ENCODE measurements at regions of chr6 and their contacts with region 1.

Region 1: GRCh38 chr6:47413752-47414422 is 63.7 kb upstream of the CD2AP start:
- DNase-seq: peak; percentile 47 to 63
- H3K4me3 ChIP-seq: peak overlapping the region; percentile 44
- H3K4me3 Mint-ChIP-seq: peak overlapping the region; percentile 59
- H3K27ac Mint-ChIP-seq: peak overlapping the region; percentile 9
- H3K4me1 ChIP-seq: peaks cover 25% of the 10 kb centered on the region
- H3K4me1 Mint-ChIP-seq: peaks cover 19% of the 10 kb centered on the region
- H3K27me3 ChIP-seq: no peaks in the 10 kb centered on the region
- H3K27me3 Mint-ChIP-seq: no peaks in the 10 kb centered on the region
- CTCF ChIP-seq: peak; percentile 79 to 82

Region 2: DNA sequence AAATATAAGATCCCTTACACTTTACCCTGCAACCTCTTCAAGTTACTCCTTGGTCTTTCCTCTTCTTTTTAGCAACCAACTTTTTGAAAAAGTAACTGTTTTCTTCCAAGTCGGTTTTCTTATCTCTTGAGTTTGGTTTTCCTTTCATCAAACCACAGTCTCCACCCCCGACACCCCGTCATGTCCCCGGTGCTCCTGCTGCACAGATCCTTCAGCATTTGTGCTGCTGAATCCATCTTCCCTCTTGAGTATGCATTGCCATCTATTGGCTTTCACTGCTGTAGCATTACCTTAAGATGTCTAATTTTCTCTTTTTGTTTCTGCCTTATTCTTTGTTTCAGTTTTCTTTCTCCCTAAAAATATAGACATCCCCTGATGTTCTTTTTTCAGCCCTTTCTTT is 92.3 kb before region 1 on chr6:
- CTCF ChIA-PET with region 1: no interaction called
- POLR2A ChIA-PET with region 1: no interaction called
- intact Hi-C with region 1: loop called (anchors 5 kb)
- DNase-seq: no peak
- H3K4me3 ChIP-seq: no peak overlapping the region
- H3K4me3 Mint-ChIP-seq: peak overlapping the region; percentile 5
- H3K27ac Mint-ChIP-seq: peak overlapping the region; percentile 84
- H3K4me1 ChIP-seq: peaks cover 49% of the 10 kb centered on the region
- H3K4me1 Mint-ChIP-seq: peaks cover 43% of the 10 kb centered on the region
- H3K27me3 ChIP-seq: no peaks in the 10 kb centered on the region
- H3K27me3 Mint-ChIP-seq: no peaks in the 10 kb centered on the region
- CTCF ChIP-seq: no peak

Region 3: DNA sequence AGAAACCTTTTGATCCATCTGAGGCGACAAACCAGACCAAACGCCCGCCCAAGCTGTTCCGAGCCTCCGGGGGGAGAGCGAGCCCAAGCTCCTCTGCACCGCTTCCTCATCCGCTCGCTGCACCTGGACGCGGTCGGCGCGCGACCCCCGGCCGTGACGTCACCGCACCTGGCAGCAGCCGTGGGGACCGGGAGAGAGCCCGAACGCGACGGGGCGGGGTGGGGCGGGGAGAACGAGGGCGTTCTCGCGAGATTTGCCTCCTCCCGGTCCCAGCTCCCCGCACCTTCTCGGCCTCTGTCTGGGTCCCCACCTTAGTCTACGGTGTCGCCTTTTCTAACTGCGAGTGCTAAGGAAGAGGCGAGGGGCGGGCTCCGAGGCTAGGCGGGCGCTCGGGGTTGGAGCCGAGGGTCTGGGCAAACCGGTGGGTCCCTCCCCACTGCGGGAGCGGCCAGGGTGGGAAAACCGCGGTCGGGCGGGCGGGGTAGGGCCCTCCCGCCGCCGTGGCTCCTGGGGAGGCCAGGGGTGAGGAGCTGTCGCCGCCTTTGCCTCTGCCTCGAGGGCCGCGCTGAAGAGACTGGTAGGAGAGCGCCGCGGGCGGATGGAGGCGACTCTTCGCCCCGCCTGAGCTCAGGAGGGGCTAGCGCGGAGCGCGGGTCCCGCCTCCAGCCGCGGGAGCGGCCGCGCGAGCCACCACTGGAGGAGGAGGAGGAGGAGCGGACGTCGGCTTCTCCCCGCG is 63.8 kb after region 1 on chr6 and contains the start of gene CD2AP:
- CTCF ChIA-PET with region 1: no interaction called
- POLR2A ChIA-PET with region 1: interaction called, 10 read pairs
- intact Hi-C with region 1: loop called (anchors 1 kb)
- DNase-seq: peak; percentile 92 to 95
- H3K4me3 ChIP-seq: peak within 1 kb of the TSS; percentile 78
- H3K4me3 Mint-ChIP-seq: peak within 1 kb of the TSS; percentile 97
- H3K27ac Mint-ChIP-seq: peak within 1 kb of the TSS; percentile 93
- H3K4me1 ChIP-seq: peaks cover 14% of the 10 kb centered on the region
- H3K4me1 Mint-ChIP-seq: peaks cover 28% of the 10 kb centered on the region
- H3K27me3 ChIP-seq: no peaks in the 10 kb centered on the region
- H3K27me3 Mint-ChIP-seq: no peaks in the 10 kb centered on the region
- CTCF ChIP-seq: peak in 1 of 2 experiments; percentile 26
- total RNA-seq, gene CD2AP: 65.3 and 69.3 TPM in 2 replicates

Region 4: GRCh38 chr6:47595797-47596196 is 181.9 kb after region 1 on chr6:
- CTCF ChIA-PET with region 1: no interaction called
- POLR2A ChIA-PET with region 1: no interaction called
- intact Hi-C with region 1: loop called (anchors 5 kb)
- DNase-seq: peak in 1 of 2 experiments; percentile 39
- H3K4me3 ChIP-seq: no peak overlapping the region
- H3K4me3 Mint-ChIP-seq: no peak overlapping the region
- H3K27ac Mint-ChIP-seq: no peak overlapping the region
- H3K4me1 ChIP-seq: peaks cover 23% of the 10 kb centered on the region; the same call in 1 of the 2 replicates
- H3K4me1 Mint-ChIP-seq: peaks cover 22% of the 10 kb centered on the region
- H3K27me3 ChIP-seq: no peaks in the 10 kb centered on the region
- H3K27me3 Mint-ChIP-seq: no peaks in the 10 kb centered on the region
- CTCF ChIP-seq: no peak

Region 5: GRCh38 chr6:47733879-47734558 is 320.1 kb after region 1 on chr6:
- CTCF ChIA-PET with region 1: no interaction called
- POLR2A ChIA-PET with region 1: no interaction called
- intact Hi-C with region 1: loop called (anchors 1 kb)
- DNase-seq: peak in 1 of 2 experiments; percentile 54
- H3K4me3 ChIP-seq: no peak overlapping the region
- H3K4me3 Mint-ChIP-seq: no peak overlapping the region
- H3K27ac Mint-ChIP-seq: no peak overlapping the region
- H3K4me1 ChIP-seq: no peaks in the 10 kb centered on the region
- H3K4me1 Mint-ChIP-seq: no peaks in the 10 kb centered on the region
- H3K27me3 ChIP-seq: no peaks in the 10 kb centered on the region
- H3K27me3 Mint-ChIP-seq: no peaks in the 10 kb centered on the region
- CTCF ChIP-seq: peak; percentile 46 to 56

Measured in Caco-2 (cell line).